ENCODE measurements at regions of chr4 and their contacts with region 1.

Region 1: DNA sequence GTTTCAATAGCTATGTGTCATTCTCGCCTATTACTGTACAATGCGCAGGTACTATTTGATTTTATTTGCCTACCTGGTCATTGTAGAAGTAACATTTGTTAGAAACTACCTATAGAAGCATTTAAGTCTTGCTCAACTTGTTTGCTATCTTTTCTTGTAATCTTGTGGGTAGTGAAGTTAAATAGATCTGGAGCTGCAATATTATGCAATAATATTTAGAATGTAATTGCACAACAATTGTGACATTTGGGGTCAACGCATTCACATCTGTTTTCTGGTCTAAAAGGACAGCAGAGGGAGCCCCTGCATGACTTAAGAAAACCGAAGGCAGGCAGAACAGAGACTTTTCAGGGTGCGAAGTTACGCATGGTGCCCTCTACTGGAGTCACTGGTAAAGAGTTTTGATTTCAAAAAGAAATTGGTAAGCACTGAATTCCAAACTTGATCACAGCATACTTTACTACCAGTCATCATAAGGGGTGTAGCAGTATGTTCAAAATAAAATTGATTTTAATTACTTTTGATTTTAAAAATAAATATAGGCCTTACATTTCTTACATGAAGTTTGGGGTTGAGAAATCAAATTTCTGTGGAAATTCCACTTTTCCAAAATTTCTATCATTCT is 503.2 kb upstream of the FAM241A start:
- DNase-seq: peak; percentile 59
- ATAC-seq: peak; percentile 51
- H3K4me3 Mint-ChIP-seq: no peak overlapping the region
- H3K27ac Mint-ChIP-seq: no peak overlapping the region
- H3K4me1 Mint-ChIP-seq: no peaks in the 10 kb centered on the region
- H3K27me3 Mint-ChIP-seq: peaks cover 2% of the 10 kb centered on the region

Region 2: GRCh38 chr4:111854494-111855087 is 212.5 kb after region 1 on chr4:
- CTCF ChIA-PET with region 1: no interaction called
- POLR2A ChIA-PET with region 1: no interaction called
- intact Hi-C with region 1: loop called (anchors 1 to 5 kb)
- DNase-seq: peak; percentile 37
- ATAC-seq: peak; percentile 55
- H3K4me3 Mint-ChIP-seq: no peak overlapping the region
- H3K27ac Mint-ChIP-seq: no peak overlapping the region
- H3K4me1 Mint-ChIP-seq: no peaks in the 10 kb centered on the region
- H3K27me3 Mint-ChIP-seq: no peaks in the 10 kb centered on the region

Region 3: GRCh38 chr4:111937368-111937767 is 295.3 kb after region 1 on chr4:
- CTCF ChIA-PET with region 1: no interaction called
- POLR2A ChIA-PET with region 1: no interaction called
- intact Hi-C with region 1: loop called in 1 of 2 experiments (anchors 5 kb)
- DNase-seq: no peak
- ATAC-seq: no peak
- H3K4me3 Mint-ChIP-seq: no peak overlapping the region
- H3K27ac Mint-ChIP-seq: no peak overlapping the region
- H3K4me1 Mint-ChIP-seq: no peaks in the 10 kb centered on the region
- H3K27me3 Mint-ChIP-seq: peaks cover 3% of the 10 kb centered on the region

Region 4: DNA sequence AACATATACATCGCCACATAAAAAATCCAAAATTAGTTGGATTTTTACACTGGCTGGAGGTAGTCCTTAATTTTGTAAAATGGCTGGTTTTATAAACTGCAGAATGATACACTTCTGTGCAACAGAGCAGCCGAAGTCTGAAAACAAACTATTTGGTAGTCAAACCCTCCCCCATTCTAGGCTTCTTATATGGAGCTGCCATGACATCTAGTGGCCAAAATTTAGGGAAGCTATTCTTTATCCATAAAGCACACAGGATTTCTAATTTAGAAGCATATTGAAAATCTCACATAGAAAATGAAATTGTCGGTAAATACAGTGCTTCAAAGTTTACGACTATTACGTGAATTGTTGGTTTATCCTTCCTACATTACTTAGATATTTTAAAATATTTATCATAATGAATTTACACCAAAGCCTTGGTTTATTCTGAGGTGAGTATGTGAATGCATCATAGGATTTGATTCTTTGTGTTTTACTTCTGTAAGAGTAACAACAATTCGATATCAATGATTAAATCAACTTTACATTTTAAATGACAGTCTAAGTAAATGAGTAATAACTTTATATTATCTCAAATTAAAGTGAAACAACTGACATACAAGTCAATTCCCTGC is 389.8 kb after region 1 on chr4:
- CTCF ChIA-PET with region 1: no interaction called
- POLR2A ChIA-PET with region 1: no interaction called
- intact Hi-C with region 1: loop called in 1 of 2 experiments (anchors 1 kb)
- DNase-seq: peak; percentile 28
- ATAC-seq: no peak
- H3K4me3 Mint-ChIP-seq: no peak overlapping the region
- H3K27ac Mint-ChIP-seq: no peak overlapping the region
- H3K4me1 Mint-ChIP-seq: no peaks in the 10 kb centered on the region
- H3K27me3 Mint-ChIP-seq: peaks cover 19% of the 10 kb centered on the region

Measured in activated CD4-positive, alpha-beta T cell treated with anti-CD3 and anti-CD28 coated beads for 36 hours (primary cell).